ENCODE measurements at regions of chr19 and their contacts with region 1.

Region 1: GRCh38 chr19:47130591-47131227 is at the start of gene SAE1:
- DNase-seq: peak; percentile 96
- ATAC-seq: peak; percentile 97
- total RNA-seq, gene SAE1: 42.2 TPM

Region 2: DNA sequence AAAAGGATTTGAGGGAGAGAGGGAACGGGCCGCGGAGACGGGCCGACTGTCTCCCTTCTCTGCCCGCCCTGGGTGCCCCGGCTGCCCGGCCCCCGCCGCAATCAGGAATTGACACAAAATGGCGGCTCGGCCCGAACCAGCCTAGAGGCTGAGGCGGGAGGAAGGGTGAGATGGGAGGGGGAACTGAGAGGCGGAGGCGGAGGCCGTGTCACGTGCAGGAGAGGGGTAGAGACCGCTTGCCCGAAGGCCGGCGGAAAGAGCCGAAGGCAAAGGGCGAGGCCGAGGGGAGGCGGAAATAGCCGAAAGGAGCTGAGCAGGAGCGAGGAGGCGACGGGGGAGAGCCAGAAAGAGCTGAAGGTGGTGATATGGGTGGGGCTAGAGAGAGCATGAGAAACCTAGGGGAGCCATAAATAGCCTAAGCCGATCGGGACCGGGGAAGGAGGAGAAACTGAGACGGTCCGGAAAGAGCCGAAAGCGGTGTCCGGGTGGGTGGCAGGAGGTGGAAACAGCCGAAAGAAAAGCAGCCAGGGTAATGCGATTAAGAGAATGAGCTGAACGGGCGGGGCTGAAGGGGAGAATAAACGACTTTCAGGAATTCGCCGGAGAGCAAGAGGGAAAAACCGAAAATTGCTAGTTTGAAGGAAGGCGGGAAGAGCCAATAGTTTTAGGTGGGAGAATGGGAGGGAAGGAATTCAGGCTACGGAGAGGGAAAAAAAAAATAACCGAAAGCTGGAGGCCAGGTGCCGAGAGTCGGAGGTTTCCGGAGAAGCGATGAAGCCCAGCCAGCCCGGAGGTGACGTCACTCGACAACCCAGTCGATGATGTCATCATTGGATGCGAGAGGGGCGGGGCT is 17.5 kb before region 1 on chr19 and contains the start of gene ZC3H4:
- intact Hi-C with region 1: loop called (anchors 1 kb)
- DNase-seq: peak; percentile 99
- ATAC-seq: peak; percentile 93
- total RNA-seq, gene ZC3H4: 20.6 TPM

Region 3: GRCh38 chr19:47176627-47177090 is 46.0 kb after region 1 on chr19:
- intact Hi-C with region 1: no loop called
- DNase-seq: no peak
- ATAC-seq: peak; percentile 51